WTC11 (cell line): ENCODE measurements at regions of chr7 and their contacts with region 1.

Region 1: DNA sequence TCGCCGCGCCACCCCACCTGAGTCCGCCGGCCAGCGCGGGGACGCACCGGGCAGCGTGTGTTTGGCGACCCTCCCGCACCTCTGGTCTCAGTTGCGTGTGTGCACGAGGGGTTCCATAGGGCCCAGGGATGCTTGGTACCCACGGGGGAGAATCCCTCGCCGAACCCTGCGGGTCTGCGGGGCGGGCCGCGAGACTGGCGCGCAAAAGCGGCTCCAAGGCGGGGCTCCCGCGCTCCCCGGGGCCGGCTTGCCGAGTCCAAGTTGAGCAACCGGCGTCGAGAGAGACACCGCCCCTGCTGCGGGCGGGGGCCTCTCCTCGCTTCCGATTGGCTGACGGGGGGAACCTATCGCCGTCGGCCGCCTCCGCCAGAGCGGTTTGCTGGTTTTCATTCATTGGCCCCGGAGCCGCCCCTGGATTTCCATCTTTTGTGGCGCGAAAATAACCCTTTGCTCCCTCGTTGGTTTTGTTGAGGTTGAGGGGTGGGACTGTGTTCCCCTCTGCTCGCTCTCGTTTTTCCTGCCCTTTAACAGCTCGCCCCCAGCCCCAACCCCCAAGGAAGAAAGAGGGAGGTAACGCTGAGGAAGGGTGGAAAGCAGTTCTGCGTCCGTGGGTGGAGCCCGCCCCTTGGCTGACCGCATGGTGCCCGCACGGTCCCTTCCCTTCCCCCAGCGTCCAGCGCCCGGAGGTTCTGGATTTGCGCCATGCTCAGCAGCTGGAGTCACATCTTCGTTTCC is 4.0 kb upstream of the IGF2BP3 start:
- DNase-seq: peak; percentile 97
- ATAC-seq: peak; percentile 67
- H3K4me3 Mint-ChIP-seq: peak overlapping the region; percentile 98
- H3K27ac Mint-ChIP-seq: peak overlapping the region; percentile 97
- H3K4me1 Mint-ChIP-seq: peaks cover 31% of the 10 kb centered on the region
- H3K27me3 Mint-ChIP-seq: no peaks in the 10 kb centered on the region
- CTCF ChIP-seq: no peak

Region 2: DNA sequence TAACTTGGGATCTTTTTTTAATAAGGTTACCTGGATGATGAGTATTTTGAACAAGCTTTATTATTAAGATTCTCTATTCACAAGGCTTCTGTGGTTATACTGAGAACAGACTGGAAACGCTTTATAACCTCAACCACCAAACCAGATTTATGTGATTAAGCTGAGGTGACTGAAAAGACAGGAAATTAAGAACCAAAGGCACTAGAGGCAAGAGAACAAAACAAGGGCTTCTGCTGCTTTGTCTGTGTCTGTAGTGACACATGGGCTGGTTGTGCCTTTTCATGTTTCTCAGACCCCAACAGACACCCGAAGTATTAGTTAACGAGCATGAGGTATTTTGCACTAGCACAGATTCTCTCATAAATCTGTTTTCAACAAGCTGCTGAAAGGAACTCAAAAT is 1181.7 kb before region 1 on chr7:
- CTCF ChIA-PET with region 1: no interaction called
- POLR2A ChIA-PET with region 1: no interaction called
- DNase-seq: no peak
- ATAC-seq: no peak
- H3K4me3 Mint-ChIP-seq: no peak overlapping the region
- H3K27ac Mint-ChIP-seq: no peak overlapping the region
- H3K4me1 Mint-ChIP-seq: peaks cover 3% of the 10 kb centered on the region; the same call in 1 of the 2 replicates
- H3K27me3 Mint-ChIP-seq: no peaks in the 10 kb centered on the region
- CTCF ChIP-seq: no peak

Region 3: GRCh38 chr7:23531794-23532489 is 57.7 kb after region 1 on chr7 and contains the start of gene TRA2A:
- CTCF ChIA-PET with region 1: no interaction called
- POLR2A ChIA-PET with region 1: interaction called, 12 read pairs
- DNase-seq: peak; percentile 98
- ATAC-seq: peak; percentile 86
- H3K4me3 Mint-ChIP-seq: peak within 1 kb of the TSS; percentile 100
- H3K27ac Mint-ChIP-seq: peak within 1 kb of the TSS; percentile 100
- H3K4me1 Mint-ChIP-seq: peaks cover 47% of the 10 kb centered on the region
- H3K27me3 Mint-ChIP-seq: no peaks in the 10 kb centered on the region
- CTCF ChIP-seq: no peak
- total RNA-seq, gene TRA2A: 110 to 144 TPM (median 133 TPM) in 3 replicates